H1 (cell line): ENCODE measurements at regions of chr3 and their contacts with region 1.

Region 1: GRCh38 chr3:187738331-187739093 is 6.8 kb downstream of the BCL6 start:
- DNase-seq: peak; percentile 85 to 86
- H3K4me3 ChIP-seq: peak overlapping the region; percentile 53 to 89 (median 83)
- H3K27ac ChIP-seq: peak overlapping the region; percentile 30; the same call in 1 of the 2 replicates
- H3K4me1 ChIP-seq: peaks cover 0 to 19% (median 8%) of the 10 kb centered on the region in 4 experiments; a peak in 5 of 7 replicates
- H3K27me3 ChIP-seq: peaks cover 0 to 16% (median 7%) of the 10 kb centered on the region in 4 experiments; a peak in 3 of 7 replicates
- CTCF ChIP-seq: peak; percentile 62 to 84 (median 72)
- EP300 ChIP-seq: 0 out of 3 replicates have a peak, but pooled peaks of 1 of the 2 experiments have one; percentile 8
- POLR2A ChIP-seq: no peak
- RAD21 ChIP-seq: peak; percentile 88 to 92

Region 2: DNA sequence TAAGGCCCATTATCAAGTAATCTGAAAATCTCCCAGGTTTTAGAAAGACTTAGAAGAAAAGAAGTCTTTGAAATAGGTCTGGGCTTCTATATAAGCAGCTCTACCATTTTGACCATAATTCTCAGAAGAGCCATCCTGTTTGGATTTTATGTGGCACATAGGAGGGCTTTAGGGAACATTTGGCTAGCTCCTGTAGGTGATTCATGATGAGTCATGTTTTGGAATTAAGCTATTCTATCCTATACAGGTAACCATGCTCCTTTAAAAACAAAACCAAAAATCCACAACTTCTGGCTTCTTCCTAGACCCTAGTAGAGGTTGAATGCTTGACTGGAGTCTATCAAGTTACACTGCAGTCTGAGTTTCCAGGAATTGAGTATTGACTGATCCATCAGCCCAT is 77.2 kb before region 1 on chr3:
- CTCF ChIA-PET with region 1: no interaction called
- POLR2A ChIA-PET with region 1: no interaction called
- DNase-seq: no peak
- H3K4me3 ChIP-seq: no peak overlapping the region
- H3K27ac ChIP-seq: no peak overlapping the region
- H3K4me1 ChIP-seq: no peaks in the 10 kb centered on the region
- H3K27me3 ChIP-seq: no peaks in the 10 kb centered on the region; a peak in 1 of 7 replicates
- CTCF ChIP-seq: no peak
- EP300 ChIP-seq: no peak
- POLR2A ChIP-seq: no peak
- RAD21 ChIP-seq: no peak

Region 3: DNA sequence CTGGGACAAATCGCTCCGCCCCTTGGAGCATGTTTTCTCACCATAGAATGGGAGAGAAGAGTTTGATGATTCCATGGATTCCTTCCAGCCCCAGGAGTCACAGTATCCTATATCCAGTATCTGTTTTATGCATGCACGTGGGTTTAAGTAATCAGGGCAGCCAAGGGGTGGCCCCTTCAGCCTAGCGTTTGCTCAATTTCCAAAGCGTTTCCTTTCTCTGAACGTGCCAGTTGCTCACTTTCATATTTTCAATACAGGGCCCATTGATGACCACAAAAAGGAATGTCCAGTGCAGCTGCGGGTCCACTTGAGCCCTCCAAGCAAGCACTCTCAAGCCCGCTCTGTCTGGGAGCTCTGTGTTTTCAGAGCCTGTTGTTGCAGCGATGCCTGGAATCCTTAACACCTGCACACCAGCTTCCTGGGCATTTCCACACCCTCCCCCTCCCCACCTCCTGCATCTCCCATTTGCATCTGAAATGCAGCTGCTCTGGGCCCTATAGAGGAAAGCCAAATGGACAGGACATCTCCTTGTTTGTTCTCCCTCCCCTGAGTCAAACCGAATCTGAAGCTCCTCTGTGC is 251.2 kb after region 1 on chr3:
- CTCF ChIA-PET with region 1: interaction called, 13 read pairs
- POLR2A ChIA-PET with region 1: interaction called, 3 read pairs
- DNase-seq: peak; percentile 60 to 82
- H3K4me3 ChIP-seq: peak overlapping the region; percentile 6 to 56 (median 34); a peak in 5 of 8 replicates
- H3K27ac ChIP-seq: peak overlapping the region; percentile 36; the same call in 1 of the 2 replicates
- H3K4me1 ChIP-seq: peaks cover 0 to 5% (median 1%) of the 10 kb centered on the region in 4 experiments; a peak in 3 of 7 replicates
- H3K27me3 ChIP-seq: no peaks in the 10 kb centered on the region; a peak in 1 of 7 replicates
- CTCF ChIP-seq: no peak
- EP300 ChIP-seq: peak in 1 of 2 experiments; percentile 67; a peak in 1 of 3 replicates
- POLR2A ChIP-seq: peak in 1 of 2 experiments; percentile 69; a peak in 1 of 3 replicates
- RAD21 ChIP-seq: peak; percentile 29 to 31

Region 4: GRCh38 chr3:188061133-188061532 is 322.6 kb after region 1 on chr3:
- CTCF ChIA-PET with region 1: interaction called, 22 read pairs
- POLR2A ChIA-PET with region 1: no interaction called
- DNase-seq: no peak
- H3K4me3 ChIP-seq: no peak overlapping the region; a peak in 1 of 8 replicates
- H3K27ac ChIP-seq: no peak overlapping the region
- H3K4me1 ChIP-seq: no peaks in the 10 kb centered on the region
- H3K27me3 ChIP-seq: no peaks in the 10 kb centered on the region
- CTCF ChIP-seq: no peak
- EP300 ChIP-seq: no peak
- POLR2A ChIP-seq: no peak
- RAD21 ChIP-seq: no peak; a peak in 1 of 4 replicates

Region 5: DNA sequence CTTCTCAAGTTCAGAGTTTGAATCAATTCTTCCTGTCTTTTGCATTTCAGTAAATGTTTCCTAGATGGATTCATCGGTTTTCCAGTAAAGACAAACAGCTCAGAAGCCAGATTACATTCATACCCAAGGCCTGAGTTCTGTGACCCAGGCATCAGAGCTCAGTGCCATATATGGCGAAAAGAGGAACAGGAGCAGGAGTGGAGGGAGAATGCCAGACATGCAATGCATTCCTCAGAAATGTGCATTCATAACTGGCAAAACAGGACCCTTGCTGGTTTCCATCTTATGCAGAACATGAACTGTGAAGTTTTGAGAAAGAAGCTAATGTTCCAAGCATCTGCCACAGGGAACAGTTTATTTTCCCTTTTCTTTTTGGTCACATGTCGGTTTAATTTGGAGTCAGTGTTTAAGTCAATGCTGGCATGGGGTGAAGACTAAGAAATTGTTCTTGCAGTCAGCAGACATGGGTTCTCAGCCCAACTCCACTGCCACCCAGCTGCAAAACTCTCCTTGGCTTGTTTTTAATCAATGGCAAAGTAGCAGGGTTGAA is 532.0 kb after region 1 on chr3:
- CTCF ChIA-PET with region 1: interaction called, 12 read pairs
- POLR2A ChIA-PET with region 1: no interaction called
- DNase-seq: no peak
- H3K4me3 ChIP-seq: no peak overlapping the region
- H3K27ac ChIP-seq: no peak overlapping the region
- H3K4me1 ChIP-seq: peaks cover 8 to 25% (median 16%) of the 10 kb centered on the region in 4 experiments
- H3K27me3 ChIP-seq: no peaks in the 10 kb centered on the region
- CTCF ChIP-seq: no peak
- EP300 ChIP-seq: no peak
- POLR2A ChIP-seq: no peak
- RAD21 ChIP-seq: no peak

Region 6: GRCh38 chr3:188749010-188749617 is 1010.6 kb after region 1 on chr3:
- CTCF ChIA-PET with region 1: interaction called, 26 read pairs
- POLR2A ChIA-PET with region 1: no interaction called
- DNase-seq: peak in 1 of 2 experiments; percentile 68
- H3K4me3 ChIP-seq: no peak overlapping the region
- H3K27ac ChIP-seq: no peak overlapping the region
- H3K4me1 ChIP-seq: peaks cover 0 to 2% (median 0%) of the 10 kb centered on the region in 4 experiments; a peak in 1 of 7 replicates
- H3K27me3 ChIP-seq: no peaks in the 10 kb centered on the region
- CTCF ChIP-seq: peak; percentile 7 to 94 (median 72)
- EP300 ChIP-seq: no peak
- POLR2A ChIP-seq: no peak
- RAD21 ChIP-seq: peak; percentile 79 to 81

Region 7: DNA sequence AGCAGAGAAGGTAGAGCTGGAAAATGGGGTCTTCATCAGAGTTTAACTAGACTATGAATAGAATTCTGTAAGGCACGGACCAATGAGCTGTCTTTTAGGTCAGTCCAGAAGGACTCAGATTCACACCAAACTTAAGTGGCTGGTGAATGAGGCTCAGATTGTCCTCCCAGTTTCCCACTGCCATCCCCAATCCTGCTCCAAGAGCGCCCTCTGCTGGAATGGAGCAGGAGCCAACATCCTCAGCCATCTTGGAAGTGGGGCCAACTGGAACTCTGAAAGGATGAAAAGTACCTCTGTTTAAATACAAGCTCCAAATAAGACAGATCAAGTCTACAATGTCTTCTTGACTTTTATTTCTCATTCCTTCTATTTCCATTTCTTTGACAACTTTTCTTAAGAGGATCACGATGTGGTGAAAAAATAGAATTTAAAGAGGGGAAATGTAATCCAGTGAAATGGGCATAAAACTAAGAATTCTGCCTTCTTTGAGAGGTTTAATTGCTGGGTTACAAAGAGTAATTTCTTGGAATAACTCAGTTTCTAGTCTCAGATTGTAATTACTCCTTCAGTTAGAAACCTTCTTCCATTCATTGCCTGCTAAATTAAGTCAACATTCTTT is 1216.2 kb after region 1 on chr3:
- CTCF ChIA-PET with region 1: interaction called, 107 read pairs
- POLR2A ChIA-PET with region 1: interaction called, 15 read pairs
- DNase-seq: peak; percentile 56 to 88
- H3K4me3 ChIP-seq: no peak overlapping the region
- H3K27ac ChIP-seq: no peak overlapping the region
- H3K4me1 ChIP-seq: no peaks in the 10 kb centered on the region
- H3K27me3 ChIP-seq: no peaks in the 10 kb centered on the region
- CTCF ChIP-seq: peak; percentile 83 to 98 (median 93)
- EP300 ChIP-seq: no peak
- POLR2A ChIP-seq: no peak
- RAD21 ChIP-seq: peak; percentile 100